Caco-2 (cell line): ENCODE measurements at regions of chr7 and their contacts with region 1.

Region 1: DNA sequence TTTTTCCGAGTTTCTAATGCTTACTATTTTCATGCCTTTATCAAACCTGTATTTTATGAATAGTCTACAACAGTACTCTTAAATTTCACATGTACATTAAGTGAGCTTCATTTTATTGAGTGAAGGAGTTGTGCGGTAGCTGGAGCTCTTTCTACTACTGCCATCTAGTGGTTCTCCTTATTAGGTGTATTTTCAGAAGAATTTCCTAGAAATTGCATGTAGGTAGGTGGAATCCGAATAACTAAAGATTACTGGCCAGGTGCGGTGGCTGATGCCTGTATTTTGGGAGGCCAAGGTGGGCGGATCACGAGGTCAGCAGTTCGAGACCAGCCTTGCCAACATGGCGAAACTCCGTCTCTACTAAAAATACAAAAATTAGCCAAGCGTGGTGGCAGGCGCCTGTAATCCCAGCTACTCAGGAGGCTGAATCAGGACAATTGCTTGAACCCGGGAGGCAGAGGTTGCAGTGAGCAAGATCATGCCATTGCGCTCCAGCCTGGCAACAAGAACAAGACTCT is 38.3 kb downstream of the LRRC72 start:
- DNase-seq: peak in 1 of 2 experiments; percentile 64
- H3K4me3 ChIP-seq: no peak overlapping the region
- H3K4me3 Mint-ChIP-seq: no peak overlapping the region
- H3K27ac Mint-ChIP-seq: no peak overlapping the region
- H3K4me1 ChIP-seq: peaks cover 7% of the 10 kb centered on the region
- H3K4me1 Mint-ChIP-seq: peaks cover 22% of the 10 kb centered on the region
- H3K27me3 ChIP-seq: no peaks in the 10 kb centered on the region
- H3K27me3 Mint-ChIP-seq: no peaks in the 10 kb centered on the region
- CTCF ChIP-seq: peak; percentile 64 to 73

Region 2: GRCh38 chr7:16078076-16078952 is 486.7 kb before region 1 on chr7:
- CTCF ChIA-PET with region 1: interaction called, 11 read pairs
- POLR2A ChIA-PET with region 1: no interaction called
- intact Hi-C with region 1: loop called (anchors 1 kb)
- DNase-seq: peak; percentile 43 to 79
- H3K4me3 ChIP-seq: no peak overlapping the region
- H3K4me3 Mint-ChIP-seq: no peak overlapping the region
- H3K27ac Mint-ChIP-seq: peak overlapping the region; percentile 65
- H3K4me1 ChIP-seq: peaks cover 9% of the 10 kb centered on the region
- H3K4me1 Mint-ChIP-seq: peaks cover 25% of the 10 kb centered on the region
- H3K27me3 ChIP-seq: no peaks in the 10 kb centered on the region
- H3K27me3 Mint-ChIP-seq: no peaks in the 10 kb centered on the region
- CTCF ChIP-seq: peak; percentile 63 to 64

Region 3: GRCh38 chr7:16431646-16432424 is 133.1 kb before region 1 on chr7:
- CTCF ChIA-PET with region 1: interaction called, 48 read pairs
- POLR2A ChIA-PET with region 1: no interaction called
- intact Hi-C with region 1: loop called (anchors 1 kb)
- DNase-seq: peak; percentile 50 to 69
- H3K4me3 ChIP-seq: no peak overlapping the region
- H3K4me3 Mint-ChIP-seq: no peak overlapping the region
- H3K27ac Mint-ChIP-seq: no peak overlapping the region
- H3K4me1 ChIP-seq: peaks cover 13% of the 10 kb centered on the region; the same call in 1 of the 2 replicates
- H3K4me1 Mint-ChIP-seq: peaks cover 12% of the 10 kb centered on the region
- H3K27me3 ChIP-seq: no peaks in the 10 kb centered on the region
- H3K27me3 Mint-ChIP-seq: no peaks in the 10 kb centered on the region
- CTCF ChIP-seq: peak; percentile 72 to 79

Region 4: DNA sequence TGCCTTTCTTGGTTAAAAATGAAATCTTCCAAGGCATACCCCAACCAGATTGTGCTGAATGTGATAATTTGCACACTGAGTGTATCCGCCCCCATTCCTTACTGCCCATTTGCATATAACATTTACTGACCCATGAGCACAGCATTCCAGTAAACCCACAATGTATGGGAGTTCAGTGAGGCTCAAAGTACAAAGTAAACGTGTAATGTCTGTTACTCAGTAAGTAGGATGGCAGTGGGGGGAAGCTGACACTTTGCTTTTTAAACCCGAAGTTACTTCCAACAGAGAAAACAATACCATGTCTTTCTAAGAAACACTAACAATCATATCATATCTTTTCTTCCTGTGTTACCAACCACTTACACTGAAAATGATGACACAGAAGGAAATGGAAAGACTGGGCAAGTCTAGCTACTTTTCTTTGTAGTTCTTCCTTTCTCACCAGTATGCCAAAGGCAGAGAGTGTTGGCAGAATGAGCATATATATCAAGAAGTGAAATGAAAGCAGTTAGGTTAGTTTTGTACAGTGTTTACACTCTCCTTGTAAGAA is 72.4 kb before region 1 on chr7:
- CTCF ChIA-PET with region 1: no interaction called
- POLR2A ChIA-PET with region 1: no interaction called
- intact Hi-C with region 1: loop called (anchors 1 kb)
- DNase-seq: peak; percentile 49 to 61
- H3K4me3 ChIP-seq: no peak overlapping the region
- H3K4me3 Mint-ChIP-seq: peak overlapping the region; percentile 37
- H3K27ac Mint-ChIP-seq: peak overlapping the region; percentile 69
- H3K4me1 ChIP-seq: peaks cover 40% of the 10 kb centered on the region
- H3K4me1 Mint-ChIP-seq: peaks cover 31% of the 10 kb centered on the region
- H3K27me3 ChIP-seq: no peaks in the 10 kb centered on the region
- H3K27me3 Mint-ChIP-seq: no peaks in the 10 kb centered on the region
- CTCF ChIP-seq: no peak

Region 5: GRCh38 chr7:16594061-16594460 is 29.1 kb after region 1 on chr7:
- CTCF ChIA-PET with region 1: no interaction called
- POLR2A ChIA-PET with region 1: no interaction called
- intact Hi-C with region 1: loop called (anchors 1 kb)
- DNase-seq: no peak
- H3K4me3 ChIP-seq: no peak overlapping the region
- H3K4me3 Mint-ChIP-seq: no peak overlapping the region
- H3K27ac Mint-ChIP-seq: no peak overlapping the region
- H3K4me1 ChIP-seq: peaks cover 45% of the 10 kb centered on the region
- H3K4me1 Mint-ChIP-seq: peaks cover 32% of the 10 kb centered on the region
- H3K27me3 ChIP-seq: no peaks in the 10 kb centered on the region
- H3K27me3 Mint-ChIP-seq: no peaks in the 10 kb centered on the region
- CTCF ChIP-seq: no peak

Region 6: DNA sequence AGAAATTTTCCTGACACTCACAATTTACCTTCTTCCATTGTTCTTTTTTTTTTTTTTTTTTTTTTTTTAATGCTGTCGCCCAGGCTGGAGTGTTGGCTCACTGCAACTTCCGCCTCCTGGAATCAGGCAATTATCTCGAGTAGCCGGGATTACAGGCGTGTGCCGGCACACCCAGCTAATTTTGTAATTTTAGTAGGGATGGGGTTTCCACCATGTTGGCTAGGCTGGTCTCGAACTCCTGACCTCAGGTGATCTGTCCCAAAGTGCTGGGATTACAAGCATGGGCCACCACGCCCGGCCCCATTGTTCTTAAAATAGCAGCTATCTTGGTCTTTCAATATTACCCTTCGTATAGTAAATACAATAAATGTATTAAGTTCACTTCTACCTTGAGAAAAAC is 113.1 kb after region 1 on chr7:
- CTCF ChIA-PET with region 1: no interaction called
- POLR2A ChIA-PET with region 1: no interaction called
- intact Hi-C with region 1: no loop called
- DNase-seq: no peak
- H3K4me3 ChIP-seq: no peak overlapping the region
- H3K4me3 Mint-ChIP-seq: no peak overlapping the region
- H3K27ac Mint-ChIP-seq: no peak overlapping the region
- H3K4me1 ChIP-seq: peaks cover 22% of the 10 kb centered on the region
- H3K4me1 Mint-ChIP-seq: peaks cover 37% of the 10 kb centered on the region
- H3K27me3 ChIP-seq: no peaks in the 10 kb centered on the region
- H3K27me3 Mint-ChIP-seq: no peaks in the 10 kb centered on the region
- CTCF ChIP-seq: no peak